Left cardiac atrium (tissue), 4 donors: ENCODE measurements at regions of chr5 and their contacts with region 1.

Region 1: GRCh38 chr5:164048359-164048926 is 543.0 kb downstream of the MAT2B start:
- DNase-seq: no peak
- ATAC-seq: no peak

Region 2: GRCh38 chr5:163993126-163993525 is 55.3 kb before region 1 on chr5:
- intact Hi-C with region 1: no loop called
- DNase-seq: no peak
- ATAC-seq: no peak

Region 3: DNA sequence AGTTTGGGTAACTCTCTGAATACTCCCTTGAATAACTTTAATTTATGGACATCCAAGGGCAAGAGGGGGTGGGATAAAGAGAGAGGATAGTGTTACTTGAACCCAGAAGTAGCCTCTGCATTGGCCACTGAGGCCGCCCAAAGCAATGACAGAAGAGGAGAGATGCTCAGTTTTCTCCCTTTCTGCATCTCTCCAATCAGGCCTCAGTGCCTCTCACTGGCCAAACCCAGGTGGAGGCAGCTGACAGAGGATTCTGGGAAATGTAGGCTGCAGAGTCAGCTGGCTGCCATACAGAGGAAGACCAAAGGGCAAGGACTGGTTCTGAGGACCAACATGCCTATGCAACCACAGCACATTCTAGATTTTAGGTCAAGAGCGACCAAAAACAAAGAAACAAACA is 176.3 kb after region 1 on chr5:
- intact Hi-C with region 1: no loop called
- DNase-seq: no peak
- ATAC-seq: no peak

Region 4: GRCh38 chr5:164475339-164475977 is 427.0 kb after region 1 on chr5:
- intact Hi-C with region 1: loop called (anchors 10 kb)
- DNase-seq: no peak
- ATAC-seq: no peak